Activated CD4-positive, alpha-beta memory T cell treated with anti-CD3 and anti-CD28 coated beads, Interleukin-2, amount 10 ng/mL, durations not matched to agents 7 days and 5 days (primary cell): ENCODE measurements at regions of chrX and their contacts with region 1.

Region 1: DNA sequence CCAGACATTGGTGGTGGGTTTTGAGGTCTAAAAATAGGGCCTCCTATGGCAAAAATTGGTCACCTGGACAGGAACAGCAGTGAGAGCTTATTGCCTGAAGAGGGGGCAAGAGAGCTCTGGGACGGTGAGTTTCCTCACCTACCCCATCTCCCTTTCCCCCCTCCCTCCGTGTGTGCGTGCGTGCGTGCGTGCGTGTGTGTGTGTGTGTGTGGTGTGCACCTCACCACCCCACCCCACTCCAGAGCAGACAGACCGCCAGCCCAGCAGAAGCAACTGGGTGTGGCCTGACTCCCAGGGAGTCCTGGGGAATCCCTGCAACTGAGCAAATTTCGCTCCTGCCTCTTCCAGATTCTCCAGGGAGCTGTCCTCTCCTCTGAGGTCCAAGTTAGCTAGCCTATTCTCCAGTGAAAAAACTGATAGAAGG is 44.7 kb downstream of the PRPS1 start:
- DNase-seq: peak; percentile 85
- H3K4me3 Mint-ChIP-seq: peak overlapping the region; percentile 41
- H3K27ac Mint-ChIP-seq: peak overlapping the region; percentile 93
- H3K4me1 Mint-ChIP-seq: peaks cover 48% of the 10 kb centered on the region
- H3K27me3 Mint-ChIP-seq: no peaks in the 10 kb centered on the region

Region 2: DNA sequence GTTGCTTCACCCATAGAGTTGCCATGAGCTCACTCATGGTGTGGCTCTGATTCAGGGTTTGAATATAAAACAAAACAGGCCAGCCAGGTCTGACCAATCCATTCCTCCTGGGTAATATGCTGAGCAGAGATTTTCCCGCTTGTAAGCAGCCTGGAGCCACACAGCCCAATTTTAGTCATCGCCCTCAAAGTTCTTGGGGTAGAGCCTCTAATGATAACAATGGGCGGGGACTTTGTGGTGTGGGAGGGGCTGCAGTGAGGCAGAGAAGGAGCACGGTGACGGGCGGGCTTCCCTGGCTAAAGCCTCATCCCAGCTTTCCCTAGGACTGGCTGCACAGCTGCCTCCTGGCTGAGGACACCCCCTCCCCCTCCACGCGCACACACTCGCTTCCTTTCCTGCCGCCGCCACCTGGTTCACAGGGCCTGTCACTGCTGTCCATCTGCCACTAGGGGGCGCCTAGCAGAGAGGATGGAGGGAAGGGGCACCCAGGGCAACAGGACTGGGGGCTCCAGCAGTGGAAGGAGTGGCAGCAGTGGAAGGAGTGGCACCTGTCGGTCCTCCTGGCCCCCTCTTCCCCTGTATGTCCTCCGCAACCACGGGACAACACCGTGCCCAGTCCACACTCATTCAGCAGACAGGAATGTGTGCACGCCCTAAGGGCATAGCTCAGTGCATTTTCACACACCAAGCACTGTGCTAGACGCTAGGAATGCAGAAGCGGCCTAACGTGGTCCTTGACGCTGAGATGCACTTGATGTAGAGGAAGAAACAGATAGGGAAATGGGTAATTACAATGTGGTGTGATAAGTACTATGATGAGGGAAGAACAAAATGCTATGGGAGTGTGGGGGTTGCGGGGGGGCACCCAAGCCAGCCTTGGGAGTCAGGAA is 17.9 kb before region 1 on chrX:
- CTCF ChIA-PET with region 1: interaction called, 21 read pairs
- POLR2A ChIA-PET with region 1: no interaction called
- DNase-seq: peak; percentile 66
- H3K4me3 Mint-ChIP-seq: no peak overlapping the region
- H3K27ac Mint-ChIP-seq: no peak overlapping the region
- H3K4me1 Mint-ChIP-seq: peaks cover 13% of the 10 kb centered on the region
- H3K27me3 Mint-ChIP-seq: no peaks in the 10 kb centered on the region

Region 3: GRCh38 chrX:107716816-107717700 is 44.1 kb after region 1 on chrX:
- CTCF ChIA-PET with region 1: interaction called, 295 read pairs
- POLR2A ChIA-PET with region 1: interaction called, 368 read pairs
- DNase-seq: peak; percentile 91
- H3K4me3 Mint-ChIP-seq: peak overlapping the region; percentile 93
- H3K27ac Mint-ChIP-seq: peak overlapping the region; percentile 89
- H3K4me1 Mint-ChIP-seq: peaks cover 52% of the 10 kb centered on the region
- H3K27me3 Mint-ChIP-seq: no peaks in the 10 kb centered on the region

Region 4: DNA sequence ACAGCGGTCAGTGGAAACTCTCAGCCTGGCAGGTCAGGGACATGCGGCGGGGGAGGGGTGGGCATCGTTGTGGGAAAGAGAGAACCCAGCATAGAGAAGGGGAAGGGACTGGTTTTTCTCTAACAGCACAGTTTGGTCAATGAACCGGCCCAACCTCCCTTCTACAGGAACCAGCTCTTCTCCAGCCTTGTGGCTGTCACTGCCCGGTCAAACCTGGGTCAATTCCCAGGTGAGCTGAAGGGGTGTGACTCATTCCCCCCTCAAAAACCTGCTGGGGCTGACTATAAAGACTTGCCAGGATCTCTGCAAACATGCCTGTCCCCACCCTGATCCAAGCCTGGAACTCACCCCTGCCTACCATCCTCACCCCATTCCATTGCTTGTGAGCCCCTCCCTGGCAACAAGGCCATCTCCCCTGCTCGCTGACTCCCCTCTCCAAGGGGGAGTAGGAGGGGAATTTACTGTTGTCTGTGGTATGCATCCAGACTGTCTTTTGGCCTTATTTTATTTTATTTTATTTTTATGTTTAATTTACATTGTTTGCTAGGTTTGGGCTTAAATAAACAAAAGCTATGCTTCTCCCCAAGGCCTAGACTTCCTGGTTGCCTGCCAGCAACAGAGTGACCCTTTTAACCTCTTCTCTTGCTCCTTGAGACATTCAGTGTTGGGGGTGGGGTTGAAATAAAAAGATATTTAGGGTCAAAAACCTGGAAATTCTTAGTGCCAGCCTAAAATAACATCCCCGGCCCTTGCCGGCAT is 53.0 kb after region 1 on chrX:
- CTCF ChIA-PET with region 1: interaction called, 295 read pairs
- POLR2A ChIA-PET with region 1: interaction called, 3 read pairs
- DNase-seq: no peak
- H3K4me3 Mint-ChIP-seq: no peak overlapping the region
- H3K27ac Mint-ChIP-seq: no peak overlapping the region
- H3K4me1 Mint-ChIP-seq: no peaks in the 10 kb centered on the region
- H3K27me3 Mint-ChIP-seq: no peaks in the 10 kb centered on the region

Region 5: DNA sequence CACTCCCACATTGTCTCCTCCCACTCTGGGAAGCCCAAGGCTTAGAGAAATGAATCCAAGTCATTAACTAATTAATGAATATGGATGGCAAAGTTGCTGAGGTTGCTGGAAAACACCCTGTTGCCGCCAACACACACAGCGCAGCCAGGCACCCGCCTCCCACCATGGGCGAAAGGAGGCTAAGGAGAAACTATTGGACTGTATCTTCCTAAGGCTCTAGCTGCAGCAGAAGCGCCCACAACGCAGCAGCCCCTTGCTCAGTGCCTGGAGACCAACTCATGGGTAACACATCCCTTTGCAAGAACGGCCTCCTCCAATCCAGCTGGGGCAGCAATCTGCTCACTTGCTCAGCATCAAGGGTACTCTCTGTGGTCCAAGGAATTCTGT is 68.4 kb after region 1 on chrX:
- CTCF ChIA-PET with region 1: interaction called, 22 read pairs
- POLR2A ChIA-PET with region 1: interaction called, 13 read pairs
- DNase-seq: no peak
- H3K4me3 Mint-ChIP-seq: peak overlapping the region; percentile 72
- H3K27ac Mint-ChIP-seq: peak overlapping the region; percentile 93
- H3K4me1 Mint-ChIP-seq: peaks cover 16% of the 10 kb centered on the region
- H3K27me3 Mint-ChIP-seq: no peaks in the 10 kb centered on the region

Region 6: DNA sequence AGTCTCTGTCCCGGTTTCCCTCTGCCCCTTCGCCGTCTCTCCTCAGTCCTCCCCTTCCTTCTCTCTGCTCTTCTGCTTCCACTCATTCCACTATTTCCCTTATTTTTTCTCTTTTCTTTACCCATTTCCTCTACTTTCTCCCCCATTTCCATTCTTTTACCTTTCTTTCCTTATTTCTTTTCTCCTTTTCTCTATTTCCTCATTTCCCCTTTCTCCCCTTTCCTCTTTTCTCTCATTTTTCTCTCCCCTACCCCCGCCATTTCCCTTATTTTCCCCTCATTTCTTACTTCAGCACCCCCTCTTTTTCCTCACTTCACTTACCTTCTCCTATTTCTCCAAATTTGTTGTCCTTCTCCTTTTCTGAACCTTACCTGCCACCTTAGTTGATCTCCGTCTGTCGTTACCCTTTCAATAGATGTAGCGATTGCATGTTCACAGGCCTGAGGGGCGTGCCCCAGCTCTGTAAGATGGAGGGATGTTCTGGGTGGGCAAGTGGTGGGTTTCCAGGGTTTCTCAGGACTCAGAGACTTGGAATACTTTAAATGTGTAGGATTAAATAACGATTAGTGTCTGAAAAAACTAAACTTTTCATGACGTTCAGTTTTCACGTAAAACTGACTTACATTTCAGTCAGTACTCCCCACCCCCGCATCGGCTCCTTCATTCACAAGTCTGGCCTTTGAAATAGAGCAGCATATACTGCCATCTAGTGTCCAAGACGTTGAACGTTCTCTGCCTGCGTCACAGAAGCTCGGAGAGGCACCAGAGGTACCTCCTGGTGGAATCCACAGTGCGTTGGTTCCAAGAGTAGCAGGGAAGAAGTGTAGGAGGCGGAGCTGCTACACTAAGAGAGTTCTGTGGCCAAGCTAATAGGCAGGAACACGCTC is 103.9 kb after region 1 on chrX:
- CTCF ChIA-PET with region 1: interaction called, 80 read pairs
- POLR2A ChIA-PET with region 1: interaction called, 21 read pairs
- DNase-seq: peak; percentile 74
- H3K4me3 Mint-ChIP-seq: peak overlapping the region; percentile 81
- H3K27ac Mint-ChIP-seq: no peak overlapping the region
- H3K4me1 Mint-ChIP-seq: peaks cover 13% of the 10 kb centered on the region
- H3K27me3 Mint-ChIP-seq: peaks cover 6% of the 10 kb centered on the region